Common myeloid progenitor, CD34-positive (primary cell): ENCODE measurements at regions of chr15 and their contacts with region 1.

Region 1: GRCh38 chr15:41465822-41466421 is 27.8 kb upstream of the ITPKA start:
- DNase-seq: peak; percentile 60 to 79 (median 69)
- H3K4me3 ChIP-seq: no peak overlapping the region
- H3K27ac ChIP-seq: no peak overlapping the region
- H3K4me1 ChIP-seq: no peaks in the 10 kb centered on the region
- H3K27me3 ChIP-seq: no peaks in the 10 kb centered on the region

Region 2: DNA sequence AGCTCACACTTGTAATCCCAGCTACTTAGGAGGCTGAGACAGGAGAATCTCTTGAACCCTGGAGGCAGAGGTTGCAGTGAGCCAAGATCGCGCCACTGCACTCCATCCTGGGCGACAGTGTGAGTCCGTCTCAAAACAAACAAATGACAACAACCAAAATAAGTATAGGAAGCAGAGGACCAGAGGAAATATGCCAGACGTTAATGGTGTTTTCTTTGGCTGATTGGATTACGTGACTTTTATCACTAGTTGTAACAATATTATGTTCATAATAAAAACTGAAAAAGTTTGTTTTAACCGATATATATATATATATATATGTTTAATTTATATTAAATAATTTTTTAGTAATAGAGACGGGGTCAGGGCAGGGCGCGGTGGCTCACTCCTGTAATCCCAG is 111.6 kb before region 1 on chr15:
- CTCF ChIA-PET with region 1: no interaction called
- POLR2A ChIA-PET with region 1: no interaction called
- DNase-seq: no peak
- H3K4me3 ChIP-seq: no peak overlapping the region
- H3K27ac ChIP-seq: no peak overlapping the region
- H3K4me1 ChIP-seq: no peaks in the 10 kb centered on the region
- H3K27me3 ChIP-seq: no peaks in the 10 kb centered on the region

Region 3: GRCh38 chr15:41476416-41477048 is 10.6 kb after region 1 on chr15:
- CTCF ChIA-PET with region 1: interaction called, 15 read pairs
- POLR2A ChIA-PET with region 1: interaction called, 5 read pairs
- DNase-seq: no peak
- H3K4me3 ChIP-seq: no peak overlapping the region
- H3K27ac ChIP-seq: no peak overlapping the region
- H3K4me1 ChIP-seq: peaks cover 0 to 8% (median 4%) of the 10 kb centered on the region in 4 experiments
- H3K27me3 ChIP-seq: no peaks in the 10 kb centered on the region

Region 4: DNA sequence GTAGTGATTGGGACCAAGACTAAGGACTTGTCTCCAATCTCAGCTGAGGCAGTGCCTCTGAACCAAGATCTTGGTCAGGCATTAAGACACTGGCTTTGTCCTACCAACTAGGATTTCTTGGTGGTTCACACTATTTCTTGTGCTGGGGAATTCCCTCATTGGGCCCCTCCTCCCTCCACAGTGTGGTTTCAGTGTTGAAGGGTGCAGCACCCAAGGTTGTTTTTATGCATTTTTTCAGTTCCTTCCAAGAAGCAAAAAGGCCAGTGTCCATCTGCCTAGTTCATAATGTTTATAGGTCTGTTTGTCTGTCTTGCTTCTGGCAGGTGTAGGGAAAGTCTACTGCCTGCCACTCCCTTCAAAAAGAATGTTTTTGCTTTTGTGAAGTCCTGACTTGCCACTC is 17.2 kb after region 1 on chr15:
- CTCF ChIA-PET with region 1: interaction called, 15 read pairs
- POLR2A ChIA-PET with region 1: interaction called, 5 read pairs
- DNase-seq: no peak
- H3K4me3 ChIP-seq: no peak overlapping the region
- H3K27ac ChIP-seq: no peak overlapping the region
- H3K4me1 ChIP-seq: peaks cover 0 to 2% (median 0%) of the 10 kb centered on the region in 4 experiments
- H3K27me3 ChIP-seq: peaks cover 0 to 6% (median 0%) of the 10 kb centered on the region in 5 experiments

Region 5: DNA sequence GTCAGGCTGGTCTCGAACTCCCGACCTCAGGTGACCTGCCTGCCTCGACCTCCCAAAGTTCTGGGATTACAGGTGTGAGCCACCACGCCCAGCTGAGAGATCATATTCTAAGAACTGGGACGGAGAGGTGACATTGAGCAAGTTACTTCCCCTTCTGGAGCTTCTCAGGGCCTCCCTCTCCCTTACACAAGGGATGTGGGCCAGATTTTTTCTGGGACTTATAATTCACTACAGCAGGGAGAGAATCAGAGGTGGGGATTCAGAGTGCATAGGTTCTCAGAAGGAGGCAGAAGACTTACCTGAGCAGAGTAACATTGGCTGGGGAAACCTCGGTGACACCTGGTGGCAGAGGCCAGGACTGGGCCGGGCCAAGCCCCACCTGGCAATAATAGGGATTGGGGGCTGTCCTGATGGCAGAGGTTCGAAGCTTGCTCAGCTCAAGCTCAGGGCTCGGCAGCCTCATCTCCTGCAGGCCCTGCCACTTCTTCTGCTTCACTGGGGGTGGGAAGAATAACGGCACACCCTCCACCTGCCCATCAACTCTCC is 40.9 kb after region 1 on chr15:
- CTCF ChIA-PET with region 1: interaction called, 12 read pairs
- POLR2A ChIA-PET with region 1: no interaction called
- DNase-seq: no peak
- H3K4me3 ChIP-seq: no peak overlapping the region
- H3K27ac ChIP-seq: no peak overlapping the region
- H3K4me1 ChIP-seq: peaks cover 0 to 32% (median 26%) of the 10 kb centered on the region in 4 experiments
- H3K27me3 ChIP-seq: peaks cover 4 to 48% (median 6%) of the 10 kb centered on the region in 5 experiments

Region 6: GRCh38 chr15:41544650-41545015 is 78.7 kb after region 1 on chr15:
- CTCF ChIA-PET with region 1: no interaction called
- POLR2A ChIA-PET with region 1: no interaction called
- DNase-seq: peak in 2 of 3 donors; percentile 20 to 33
- H3K4me3 ChIP-seq: peak overlapping the region in 2 of 7 experiments; percentile 92 to 99
- H3K27ac ChIP-seq: no peak overlapping the region
- H3K4me1 ChIP-seq: peaks cover 3 to 11% (median 5%) of the 10 kb centered on the region in 4 experiments
- H3K27me3 ChIP-seq: no peaks in the 10 kb centered on the region